Gastrocnemius medialis (tissue), 4 donors: ENCODE measurements at regions of chr6 and their contacts with region 1.

Region 1: DNA sequence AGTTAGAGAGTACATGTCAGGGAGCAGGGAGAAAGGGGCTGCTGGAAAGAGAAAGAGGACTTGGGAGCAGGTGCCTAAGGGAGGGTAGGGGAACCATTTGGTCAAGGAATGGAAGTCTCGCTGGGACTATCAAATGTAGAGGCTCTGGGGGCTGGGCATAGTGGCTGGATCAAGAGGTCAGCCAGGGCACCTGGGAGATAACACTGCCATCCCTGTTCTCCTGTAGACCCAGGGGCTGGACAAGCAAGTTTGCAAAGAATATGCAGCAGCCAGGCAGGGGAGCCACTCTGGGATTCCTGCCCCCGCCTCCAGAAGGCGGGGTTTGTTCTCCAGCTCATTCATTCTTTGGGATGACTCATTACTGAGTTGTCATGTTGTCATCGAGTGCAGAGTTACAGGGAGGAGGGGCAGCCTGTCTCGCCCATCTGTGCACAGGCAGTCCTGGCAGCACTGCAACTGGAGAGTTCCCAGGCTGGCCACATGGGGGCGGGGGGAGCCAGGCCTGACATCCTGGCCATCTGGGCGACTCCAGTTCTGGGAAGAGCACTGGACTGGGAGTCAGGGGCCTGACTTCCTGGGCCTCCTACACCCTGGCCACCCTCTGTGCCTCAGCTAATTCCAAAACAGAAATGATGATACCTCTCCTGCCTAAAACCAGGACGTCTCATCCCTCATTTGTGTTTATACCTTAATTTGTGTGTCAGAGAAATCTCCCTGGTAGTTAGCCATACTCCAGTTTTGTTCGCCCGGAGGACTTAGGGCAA is 28.2 kb upstream of the ZFAND3 start:
- DNase-seq: peak; percentile 91 to 96
- ATAC-seq: peak; percentile 85 to 91
- H3K4me3 ChIP-seq: no peak overlapping the region
- H3K27ac ChIP-seq: peak overlapping the region in 3 of 4 donors; percentile 23 to 65 (median 48)
- H3K4me1 ChIP-seq: peaks cover 29 to 37% of the 10 kb centered on the region in 2 donors
- H3K27me3 ChIP-seq: no peaks in the 10 kb centered on the region
- CTCF ChIP-seq: peak; percentile 95 to 98 (median 97)
- POLR2A ChIP-seq: no peak

Region 2: DNA sequence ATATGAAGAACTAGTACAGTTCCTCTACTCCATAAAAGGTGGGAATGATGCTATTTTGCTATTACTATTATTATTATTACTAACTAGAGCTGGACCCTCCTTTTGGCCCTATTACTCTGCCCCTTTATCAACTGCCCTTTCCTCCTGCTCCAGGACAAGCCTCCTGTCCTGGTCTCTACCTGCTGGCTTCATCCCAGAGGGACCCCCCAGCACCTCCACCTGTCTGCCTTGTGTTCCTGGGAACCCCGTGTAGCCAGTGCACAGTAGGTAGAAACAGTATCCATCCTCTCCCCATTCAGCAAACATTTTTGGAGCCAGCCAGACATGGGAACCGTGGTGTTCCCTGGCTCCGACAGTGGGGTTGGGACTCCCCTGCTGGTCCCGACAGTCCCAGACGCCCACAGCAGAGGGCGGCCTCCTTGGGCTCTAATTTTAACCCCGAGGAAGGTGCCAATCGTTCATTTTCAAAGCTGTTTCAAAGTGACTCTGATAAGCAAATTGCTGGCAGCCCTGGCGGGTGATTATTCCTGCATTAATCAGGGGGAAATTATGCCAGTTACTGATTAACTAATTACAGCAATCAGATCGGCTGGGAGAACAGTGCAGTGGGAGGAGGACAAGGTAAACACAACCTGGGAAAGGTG is 49.5 kb before region 1 on chr6:
- in situ Hi-C with region 1: no loop called
- intact Hi-C with region 1: no loop called
- DNase-seq: no peak
- ATAC-seq: no peak
- H3K4me3 ChIP-seq: no peak overlapping the region
- H3K27ac ChIP-seq: no peak overlapping the region
- H3K4me1 ChIP-seq: no peaks in the 10 kb centered on the region
- H3K27me3 ChIP-seq: peaks cover 0 to 3% (median 0%) of the 10 kb centered on the region in 3 donors
- CTCF ChIP-seq: peak in 4 of 5 experiments; percentile 25 to 58 (median 42)
- POLR2A ChIP-seq: no peak

Region 3: GRCh38 chr6:37819177-37819823 is 28.0 kb after region 1 on chr6 and contains the start of gene ZFAND3:
- in situ Hi-C with region 1: no loop called
- intact Hi-C with region 1: loop called (anchors 1 kb)
- DNase-seq: peak; percentile 93 to 95
- ATAC-seq: peak; percentile 79 to 81
- H3K4me3 ChIP-seq: peak within 1 kb of the TSS; percentile 87 to 91 (median 89)
- H3K27ac ChIP-seq: peak within 1 kb of the TSS; percentile 96 to 99 (median 98)
- H3K4me1 ChIP-seq: peaks cover 41 to 44% of the 10 kb centered on the region in 2 donors
- H3K27me3 ChIP-seq: no peaks in the 10 kb centered on the region
- CTCF ChIP-seq: no peak
- POLR2A ChIP-seq: peak; percentile 50 to 63
- total RNA-seq, gene ZFAND3: 45.0 to 55.2 (median 49.5) TPM

Region 4: DNA sequence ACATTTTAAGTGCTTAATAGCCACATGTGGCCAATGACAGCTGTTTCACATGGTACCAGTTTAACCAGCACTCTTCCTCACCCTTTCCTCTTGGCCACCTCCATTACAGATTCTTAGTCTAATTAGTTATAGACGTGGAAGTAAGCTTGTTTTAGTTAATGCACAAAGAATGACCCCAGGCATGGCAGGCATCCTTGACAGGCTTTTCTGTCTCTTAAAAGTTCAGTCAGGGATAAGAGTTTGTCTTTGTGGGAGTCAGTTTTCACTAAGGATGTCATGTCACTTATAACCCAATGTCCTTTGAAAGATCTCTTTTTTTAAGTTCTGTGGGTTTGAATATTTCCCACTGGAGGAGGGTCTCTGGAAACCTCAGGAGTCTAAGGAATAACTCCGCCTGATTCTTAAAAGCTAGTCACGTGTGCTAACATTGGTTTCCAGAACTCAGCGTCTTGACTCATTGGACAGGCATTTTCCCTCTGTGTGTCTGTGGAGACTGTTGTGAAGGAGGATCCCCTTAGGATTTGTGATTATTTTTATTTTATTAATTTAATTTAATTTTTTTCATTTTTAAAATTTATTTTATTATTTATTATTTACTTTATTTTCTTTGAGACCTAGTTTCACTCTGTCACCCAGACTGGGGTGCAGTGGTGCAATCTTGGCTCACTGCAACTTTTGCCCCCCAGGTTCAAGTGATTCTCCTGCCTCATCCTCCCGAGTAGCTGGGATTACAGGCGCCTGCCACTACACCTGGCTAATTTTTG is 199.6 kb after region 1 on chr6:
- in situ Hi-C with region 1: no loop called
- intact Hi-C with region 1: loop called (anchors 1 kb)
- DNase-seq: peak in 1 of 2 donors; percentile 23
- ATAC-seq: peak; percentile 74 to 83
- H3K4me3 ChIP-seq: no peak overlapping the region
- H3K27ac ChIP-seq: peak overlapping the region; percentile 46 to 65 (median 58)
- H3K4me1 ChIP-seq: peaks cover 87 to 94% of the 10 kb centered on the region in 2 donors
- H3K27me3 ChIP-seq: no peaks in the 10 kb centered on the region
- CTCF ChIP-seq: no peak
- POLR2A ChIP-seq: no peak

Region 5: GRCh38 chr6:38012573-38012972 is 221.2 kb after region 1 on chr6:
- in situ Hi-C with region 1: loop called in 3 of 4 experiments (anchors 10 kb)
- intact Hi-C with region 1: loop called (anchors 1 kb)
- DNase-seq: peak in 1 of 2 donors; percentile 24
- ATAC-seq: peak; percentile 72 to 83
- H3K4me3 ChIP-seq: no peak overlapping the region
- H3K27ac ChIP-seq: no peak overlapping the region
- H3K4me1 ChIP-seq: peaks cover 36 to 38% of the 10 kb centered on the region in 2 donors
- H3K27me3 ChIP-seq: no peaks in the 10 kb centered on the region
- CTCF ChIP-seq: peak; percentile 48 to 71 (median 63)
- POLR2A ChIP-seq: no peak